Heart right ventricle (tissue), 16 donors: ENCODE measurements at regions of chr1 and their contacts with region 1.

Region 1: DNA sequence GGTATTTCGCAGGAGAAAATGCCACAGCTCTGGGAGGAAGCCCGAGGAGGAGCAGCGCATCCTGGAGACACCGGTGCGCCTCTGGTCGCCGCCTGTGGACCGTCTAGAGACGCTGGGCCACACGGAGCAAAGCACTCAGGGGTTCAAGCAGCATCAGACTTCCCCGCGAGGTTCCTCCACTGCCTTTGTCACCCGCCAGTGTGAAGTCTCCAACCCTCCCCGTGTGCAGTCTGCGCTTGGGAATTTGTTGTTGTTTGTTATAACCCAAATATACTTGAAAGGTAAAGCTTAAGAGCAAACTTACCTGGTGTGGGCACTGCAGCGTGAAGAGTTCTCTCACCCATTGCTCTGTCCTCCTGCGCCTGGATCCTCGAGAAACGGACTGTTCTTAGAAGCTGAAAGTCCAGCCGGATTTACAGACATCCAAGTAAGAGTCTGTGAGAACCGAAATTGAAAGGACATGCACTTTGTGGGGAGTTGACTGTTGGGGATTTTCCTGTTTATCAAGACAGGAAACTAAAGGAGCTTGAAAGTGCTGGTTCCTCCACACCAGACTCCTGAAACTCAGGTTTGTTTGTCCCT is at the start of gene GBP4:
- DNase-seq: peak; percentile 37 to 53
- ATAC-seq: peak; percentile 71 to 89 (median 82)
- H3K4me3 ChIP-seq: peak within 1 kb of the TSS; percentile 51 to 72 (median 62)
- H3K27ac ChIP-seq: peak within 1 kb of the TSS; percentile 9 to 93 (median 86)
- H3K4me1 ChIP-seq: peaks cover 0 to 63% (median 47%) of the 10 kb centered on the region in 9 donors
- H3K27me3 ChIP-seq: no peaks in the 10 kb centered on the region
- CTCF ChIP-seq: no peak
- total RNA-seq, gene GBP4: 2.9 to 46.5 (median 10.4) TPM

Region 2: DNA sequence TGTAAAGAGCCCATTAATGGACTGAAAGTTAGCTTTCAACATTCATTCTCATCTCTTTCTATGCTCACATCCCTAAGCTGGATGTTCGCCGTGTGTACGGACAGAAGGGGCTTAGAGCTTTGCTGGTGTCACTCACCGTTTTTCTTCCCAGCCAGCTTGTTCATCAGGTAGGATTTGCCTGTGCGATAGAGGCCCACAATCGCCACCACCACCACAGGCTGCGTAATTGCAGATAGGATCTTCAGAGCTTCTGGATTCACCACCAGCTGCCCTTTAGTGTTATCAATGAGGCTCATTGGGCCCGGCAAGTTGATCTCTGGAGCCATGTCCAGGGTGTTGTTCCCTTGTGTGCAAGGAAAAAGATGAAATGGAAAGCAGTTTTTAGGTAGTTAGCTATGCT is 76.9 kb before region 1 on chr1:
- intact Hi-C with region 1: loop called in 1 of 10 experiments (anchors 5 kb)
- DNase-seq: no peak
- ATAC-seq: no peak
- H3K4me3 ChIP-seq: no peak overlapping the region
- H3K27ac ChIP-seq: no peak overlapping the region
- H3K4me1 ChIP-seq: peaks cover 0 to 36% (median 20%) of the 10 kb centered on the region in 9 donors
- H3K27me3 ChIP-seq: no peaks in the 10 kb centered on the region
- CTCF ChIP-seq: no peak

Region 3: DNA sequence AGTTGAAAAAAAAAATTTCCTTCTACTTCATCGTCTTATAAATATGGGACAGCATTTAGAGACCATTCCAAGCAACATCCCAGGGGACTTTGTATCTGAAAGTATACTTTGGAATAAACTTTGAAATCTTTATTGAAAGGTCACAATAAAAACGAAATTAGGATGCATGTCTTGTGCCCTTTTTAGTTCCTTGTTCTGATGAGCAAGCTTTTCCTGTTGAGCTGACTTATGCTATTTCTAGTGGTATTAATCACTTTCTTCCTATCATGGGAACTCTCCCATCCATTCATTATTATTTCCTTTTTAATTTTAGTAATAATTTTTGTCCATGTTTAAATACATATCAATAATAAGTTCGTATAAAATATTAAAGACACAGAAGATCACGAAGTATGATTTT is 68.7 kb before region 1 on chr1:
- intact Hi-C with region 1: loop called in 1 of 10 experiments (anchors 2 kb)
- DNase-seq: no peak
- ATAC-seq: peak in 1 of 8 donors; percentile 26
- H3K4me3 ChIP-seq: peak overlapping the region in 1 of 10 donors; percentile 46
- H3K27ac ChIP-seq: peak overlapping the region in 9 of 10 donors; percentile 63 to 92 (median 80)
- H3K4me1 ChIP-seq: peaks cover 0 to 40% (median 21%) of the 10 kb centered on the region in 9 donors
- H3K27me3 ChIP-seq: no peaks in the 10 kb centered on the region
- CTCF ChIP-seq: no peak

Region 4: DNA sequence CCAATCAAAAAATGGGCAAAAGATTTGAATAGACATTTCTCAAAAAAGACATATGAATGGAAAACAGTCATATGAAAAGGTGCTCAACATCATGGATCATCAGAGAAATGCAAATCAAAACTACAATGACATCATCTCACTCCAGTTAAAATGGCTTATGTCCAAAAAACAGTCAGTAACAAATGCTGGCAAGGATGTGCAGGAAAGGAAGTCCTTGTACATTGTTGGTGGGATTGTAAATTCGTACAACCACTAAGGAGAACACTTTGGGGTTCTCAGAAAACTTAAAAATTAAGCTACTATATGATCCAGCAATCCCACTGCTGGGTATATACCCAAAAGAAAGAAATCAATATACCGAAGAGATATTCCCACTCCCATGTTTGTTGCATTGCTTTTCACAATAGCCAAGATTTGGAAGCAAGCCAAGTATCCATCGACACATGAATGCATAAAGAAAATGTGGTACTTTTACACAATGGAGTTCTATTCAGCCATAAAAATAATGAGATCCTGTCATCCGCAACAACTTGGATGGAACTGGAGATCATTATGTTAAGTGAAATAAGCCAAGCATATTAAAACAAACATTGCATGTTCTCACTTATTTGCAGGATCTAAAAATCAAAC is 56.2 kb after region 1 on chr1:
- intact Hi-C with region 1: loop called in 2 of 10 experiments (anchors 5 kb)
- DNase-seq: no peak
- ATAC-seq: peak in 4 of 8 donors; percentile 35 to 90 (median 70)
- H3K4me3 ChIP-seq: no peak overlapping the region
- H3K27ac ChIP-seq: peak overlapping the region in 4 of 10 donors; percentile 2 to 64 (median 38)
- H3K4me1 ChIP-seq: peaks cover 0 to 7% (median 0%) of the 10 kb centered on the region in 9 donors
- H3K27me3 ChIP-seq: no peaks in the 10 kb centered on the region
- CTCF ChIP-seq: peak in 1 of 9 donors; percentile 9

Region 5: DNA sequence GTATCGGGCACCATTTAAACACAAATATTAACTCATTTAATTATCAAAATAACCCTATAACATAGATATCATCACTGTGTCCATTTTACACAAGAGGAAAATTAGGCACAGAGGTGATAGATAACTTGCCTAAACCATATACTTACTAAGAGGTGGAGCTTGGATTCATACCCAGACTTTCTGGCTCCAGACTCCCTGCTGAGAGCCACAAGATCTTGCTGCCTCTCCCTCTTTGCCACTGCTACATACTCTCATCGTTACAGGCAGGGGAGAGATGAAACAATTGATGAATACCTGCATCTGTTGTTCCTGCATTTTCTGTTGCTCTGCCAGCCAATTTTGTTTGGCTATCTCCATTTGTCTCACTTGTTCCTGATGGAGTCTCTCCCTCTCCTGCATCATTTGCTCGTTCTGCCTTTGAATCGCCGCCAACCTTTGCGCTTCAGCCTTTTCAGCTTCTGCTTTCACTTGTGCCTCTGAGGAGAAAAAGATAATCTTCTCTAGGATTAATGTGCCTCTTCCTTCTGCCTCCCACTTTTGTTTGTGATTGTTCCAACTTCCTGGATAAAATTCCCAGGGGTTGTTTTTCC is 63.4 kb after region 1 on chr1:
- intact Hi-C with region 1: loop called in 3 of 10 experiments (anchors 1 to 10 kb)
- DNase-seq: peak in 1 of 2 donors; percentile 39
- ATAC-seq: peak in 5 of 8 donors; percentile 54 to 69 (median 60)
- H3K4me3 ChIP-seq: peak overlapping the region in 7 of 10 donors; percentile 11 to 44 (median 32)
- H3K27ac ChIP-seq: peak overlapping the region in 7 of 10 donors; percentile 3 to 59 (median 42)
- H3K4me1 ChIP-seq: peaks cover 0 to 47% (median 31%) of the 10 kb centered on the region in 9 donors
- H3K27me3 ChIP-seq: no peaks in the 10 kb centered on the region
- CTCF ChIP-seq: no peak